Activated T-helper 2 cell treated with anti-CD3 and anti-CD28 coated beads, Interferon-gamma antibody, Interleukin-2, Interleukin-4, amounts not matched to agents 10 μg/mL and 5 μg/mL and 100 μg/mL, durations not matched to agents 14 hours and 24 hours and 36 hours (primary cell): ENCODE measurements at regions of chr10 and their contacts with region 1.

Region 1: DNA sequence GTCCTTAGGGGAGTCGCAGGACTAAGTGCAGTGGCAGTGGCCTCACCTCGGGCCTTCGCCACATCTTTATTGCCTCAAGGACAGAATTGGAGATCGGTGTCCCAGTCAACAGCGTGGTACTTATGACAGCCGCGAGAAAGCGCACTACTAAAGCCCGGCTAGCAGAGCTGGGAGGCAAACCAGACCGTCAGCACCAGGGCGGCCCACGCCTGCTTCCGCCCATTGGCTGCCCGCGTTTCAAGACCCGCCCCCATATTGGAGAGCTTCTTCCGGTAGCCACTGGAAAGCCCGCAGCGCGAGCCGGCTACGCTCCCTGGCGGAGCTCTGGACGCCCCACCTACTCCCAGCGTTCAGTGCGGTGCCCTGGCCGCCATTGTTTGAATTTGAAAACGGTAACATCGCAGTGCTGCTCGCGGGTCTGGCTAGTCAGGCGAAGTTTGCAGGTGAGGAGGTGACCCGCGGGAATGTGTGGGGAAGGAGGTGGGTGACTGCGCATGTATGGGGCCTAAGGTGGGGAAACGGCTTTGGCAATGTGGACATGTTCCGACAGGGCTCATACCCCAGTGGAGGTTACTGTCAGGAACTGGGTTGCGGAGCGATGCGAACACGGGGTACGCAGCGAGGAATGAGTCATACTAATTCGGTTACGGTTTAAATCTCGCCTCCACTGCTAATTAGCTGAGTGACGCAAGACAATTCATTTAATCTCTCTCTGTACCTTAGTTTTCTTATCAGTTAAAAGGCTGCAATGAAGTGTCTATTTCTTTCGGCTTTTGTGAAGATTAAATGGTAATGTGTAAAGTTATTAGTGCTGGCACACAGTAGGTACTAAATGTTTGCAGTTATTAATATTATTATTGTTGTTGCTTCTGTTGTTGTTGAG is at the start of gene KIF20B:
- DNase-seq: peak; percentile 96
- H3K4me3 Mint-ChIP-seq: peak within 1 kb of the TSS; percentile 97
- H3K27ac Mint-ChIP-seq: peak within 1 kb of the TSS; percentile 96
- H3K4me1 Mint-ChIP-seq: peaks cover 48% of the 10 kb centered on the region
- H3K27me3 Mint-ChIP-seq: no peaks in the 10 kb centered on the region
- total RNA-seq, gene KIF20B: 59.2 and 64.1 TPM in 2 replicates

Region 2: DNA sequence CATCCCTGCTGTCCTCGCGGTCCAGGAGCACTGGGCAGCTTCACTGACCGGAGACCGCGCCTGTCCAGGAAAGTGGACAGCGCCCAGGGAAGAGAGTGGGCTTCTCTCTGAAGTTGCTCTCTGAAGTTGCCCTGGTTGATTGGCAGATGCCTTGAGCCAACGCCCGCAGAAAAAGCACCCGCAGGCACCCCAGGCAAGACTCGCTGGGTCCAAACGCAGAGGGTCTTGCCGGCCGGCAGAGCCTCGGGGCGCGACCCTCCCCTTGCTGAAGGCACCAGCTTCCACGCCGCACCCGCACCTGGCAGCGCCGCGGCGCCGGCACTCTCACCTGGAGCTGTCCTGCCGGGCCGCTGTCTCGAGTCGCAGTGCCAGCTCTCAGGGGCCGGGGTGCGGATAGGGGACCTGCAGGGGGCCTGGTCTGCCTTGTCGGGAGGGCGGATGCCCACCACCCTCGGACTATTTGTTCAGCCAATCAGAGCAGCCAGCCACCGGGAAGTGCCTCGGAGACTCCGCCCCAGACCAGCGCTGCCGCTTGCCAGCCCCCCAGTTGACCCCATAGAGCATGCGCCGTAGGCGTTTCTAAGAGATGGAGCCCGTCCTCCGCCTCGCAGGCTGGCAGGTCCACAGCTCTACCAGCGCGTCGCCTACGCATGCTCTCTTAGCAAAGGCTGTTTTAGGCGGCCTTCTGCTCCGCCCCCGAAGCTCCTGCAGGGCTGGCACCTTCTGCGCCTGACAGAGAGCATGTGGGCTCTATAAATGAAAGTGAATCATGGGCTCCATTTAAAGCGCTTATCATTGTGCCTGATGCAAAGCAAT is 449.9 kb before region 1 on chr10 and contains the start of gene LIPA:
- intact Hi-C with region 1: loop called (anchors 5 kb)
- DNase-seq: peak; percentile 90
- H3K4me3 Mint-ChIP-seq: peak within 1 kb of the TSS; percentile 79
- H3K27ac Mint-ChIP-seq: no peak within 1 kb of the TSS
- H3K4me1 Mint-ChIP-seq: peaks cover 23% of the 10 kb centered on the region
- H3K27me3 Mint-ChIP-seq: peaks cover 10% of the 10 kb centered on the region
- total RNA-seq, gene LIPA: 12.9 and 13.6 TPM in 2 replicates

Region 3: GRCh38 chr10:89414146-89414878 is 287.2 kb before region 1 on chr10 and contains the start of gene IFIT5:
- intact Hi-C with region 1: loop called (anchors 5 kb)
- DNase-seq: peak; percentile 67
- H3K4me3 Mint-ChIP-seq: peak within 1 kb of the TSS; percentile 87
- H3K27ac Mint-ChIP-seq: peak within 1 kb of the TSS; percentile 93
- H3K4me1 Mint-ChIP-seq: peaks cover 40% of the 10 kb centered on the region
- H3K27me3 Mint-ChIP-seq: peaks cover 6% of the 10 kb centered on the region
- total RNA-seq, gene IFIT5: 4.4 and 4.8 TPM in 2 replicates

Region 4: DNA sequence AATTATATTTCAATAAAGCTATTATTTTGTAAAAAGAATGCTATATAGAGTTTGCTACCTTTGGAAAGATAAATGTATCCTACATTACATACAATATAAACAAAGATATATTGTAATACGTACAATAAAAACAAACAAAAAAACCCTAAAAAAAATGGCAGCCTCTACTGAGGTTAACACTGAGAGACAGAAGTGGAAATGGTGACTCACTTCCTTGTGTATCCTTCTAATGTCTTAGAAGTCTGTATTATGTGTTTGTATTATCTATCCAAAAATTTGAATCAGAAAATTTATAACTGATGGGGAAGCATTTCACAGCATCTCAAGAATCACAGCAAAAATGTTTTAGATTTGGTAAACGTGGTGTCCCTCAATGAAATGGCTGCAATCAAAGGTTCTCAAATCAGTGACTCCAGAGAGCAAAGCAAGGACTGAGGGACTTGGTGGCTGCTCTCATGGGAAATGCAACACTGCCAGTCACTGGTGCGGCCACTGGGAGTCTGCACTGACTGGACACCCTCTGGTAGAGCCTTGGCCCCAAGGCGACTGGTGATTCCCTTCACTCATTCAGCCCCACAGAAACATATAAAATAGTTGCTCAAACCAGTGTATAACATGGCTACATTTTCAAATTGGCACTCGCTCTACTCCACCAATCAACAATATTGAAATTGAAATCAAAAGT is 110.2 kb before region 1 on chr10:
- intact Hi-C with region 1: no loop called
- DNase-seq: no peak
- H3K4me3 Mint-ChIP-seq: no peak overlapping the region
- H3K27ac Mint-ChIP-seq: no peak overlapping the region
- H3K4me1 Mint-ChIP-seq: peaks cover 2% of the 10 kb centered on the region
- H3K27me3 Mint-ChIP-seq: no peaks in the 10 kb centered on the region

Region 5: DNA sequence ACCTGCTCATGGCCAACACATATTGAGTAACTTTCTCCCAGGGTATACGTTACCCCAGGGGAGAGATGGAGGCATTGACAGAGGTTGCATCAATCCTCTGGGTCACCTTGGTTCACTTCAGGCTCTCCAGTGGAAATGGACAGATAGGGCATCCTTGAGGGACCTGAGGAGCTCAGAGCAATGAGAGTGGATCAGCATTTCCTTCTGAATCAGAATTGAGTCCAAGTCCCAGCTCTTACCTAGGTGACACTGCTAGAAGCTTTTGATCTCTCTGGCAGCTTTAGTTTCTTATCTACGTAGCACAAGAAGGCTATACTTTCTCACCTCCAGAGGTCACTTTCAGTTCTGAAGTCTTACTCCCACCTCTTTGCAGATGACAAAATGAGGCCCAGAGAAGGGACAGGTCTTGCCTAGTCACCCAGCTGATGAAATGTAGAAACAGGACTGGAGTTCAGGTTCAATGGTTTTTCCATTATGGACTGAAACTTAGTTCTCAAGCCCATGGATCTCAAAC is 91.6 kb before region 1 on chr10:
- intact Hi-C with region 1: loop called (anchors 1 kb)
- DNase-seq: no peak
- H3K4me3 Mint-ChIP-seq: no peak overlapping the region
- H3K27ac Mint-ChIP-seq: no peak overlapping the region
- H3K4me1 Mint-ChIP-seq: peaks cover 17% of the 10 kb centered on the region
- H3K27me3 Mint-ChIP-seq: no peaks in the 10 kb centered on the region

Region 6: DNA sequence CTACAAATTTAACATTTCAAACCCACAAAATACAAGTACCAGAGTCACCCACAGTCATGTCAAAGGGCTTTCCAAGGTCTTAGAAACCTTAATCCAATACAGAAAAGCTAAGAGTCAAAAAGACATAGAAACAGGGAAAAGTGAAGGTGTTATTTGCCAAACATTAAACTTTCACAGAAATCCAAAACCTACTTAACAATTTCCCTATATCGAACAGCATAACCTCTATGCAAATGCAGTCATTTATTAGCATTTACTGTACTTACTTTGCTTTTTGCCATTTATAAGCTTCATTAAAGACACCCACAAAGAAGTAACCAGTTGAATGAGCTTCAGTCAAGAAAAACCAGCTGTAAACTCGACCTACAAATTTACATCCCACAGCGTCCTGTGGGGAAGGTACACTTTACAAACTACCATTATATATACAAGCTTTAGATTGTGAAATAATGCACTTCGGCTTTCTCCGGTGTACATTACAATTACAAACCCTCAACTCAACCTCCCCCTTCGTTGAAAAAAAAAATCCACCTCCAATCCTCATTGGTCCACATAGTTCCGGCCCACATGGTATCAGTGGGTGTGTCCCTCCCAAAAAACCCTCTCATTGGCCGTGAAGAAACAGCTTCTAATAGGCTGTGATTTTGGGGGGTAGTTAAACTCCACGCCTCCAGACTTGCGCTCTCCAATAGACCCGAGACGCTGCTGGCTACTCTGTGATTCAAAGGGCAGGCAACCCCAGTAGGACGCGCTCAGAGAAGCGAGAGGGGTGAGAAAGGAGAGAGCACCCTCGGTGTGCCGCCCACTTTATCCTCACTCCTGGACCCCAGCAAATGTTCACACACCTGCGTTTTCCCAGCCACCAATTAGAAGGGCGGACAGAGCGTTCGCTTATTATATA is 57.8 kb before region 1 on chr10:
- intact Hi-C with region 1: loop called (anchors 1 kb)
- DNase-seq: peak; percentile 79
- H3K4me3 Mint-ChIP-seq: no peak overlapping the region
- H3K27ac Mint-ChIP-seq: no peak overlapping the region
- H3K4me1 Mint-ChIP-seq: peaks cover 12% of the 10 kb centered on the region
- H3K27me3 Mint-ChIP-seq: peaks cover 12% of the 10 kb centered on the region

Region 7: DNA sequence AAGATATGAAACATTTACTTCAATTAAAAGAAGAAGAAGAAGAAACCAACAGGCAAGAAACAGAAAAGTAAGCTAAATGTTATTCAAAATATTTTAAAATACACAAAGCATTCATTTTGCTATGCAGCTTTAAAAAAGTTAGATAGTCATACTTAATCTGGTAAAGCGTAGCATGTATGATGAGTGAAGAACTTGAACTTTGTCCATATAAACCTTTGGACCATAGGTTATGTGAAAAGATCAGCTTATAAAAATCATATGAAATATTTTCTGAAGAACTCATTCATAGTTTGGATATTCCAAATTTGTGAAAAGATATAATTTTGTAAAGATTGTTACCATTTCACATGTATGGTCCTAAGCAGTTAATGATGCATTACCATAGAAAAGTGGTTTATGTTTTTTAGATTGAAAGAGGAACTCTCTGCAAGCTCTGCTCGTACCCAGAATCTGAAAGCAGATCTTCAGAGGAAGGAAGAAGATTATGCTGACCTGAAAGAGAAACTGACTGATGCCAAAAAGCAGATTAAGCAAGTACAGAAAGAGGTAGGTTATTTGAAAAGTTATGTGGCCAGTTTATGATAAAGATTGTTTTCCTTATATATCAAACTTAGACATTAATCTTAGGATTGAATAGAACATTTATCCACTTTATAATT is 37.2 kb after region 1 on chr10:
- intact Hi-C with region 1: loop called (anchors 5 kb)
- DNase-seq: no peak
- H3K4me3 Mint-ChIP-seq: peak overlapping the region; percentile 60
- H3K27ac Mint-ChIP-seq: peak overlapping the region; percentile 84
- H3K4me1 Mint-ChIP-seq: peaks cover 33% of the 10 kb centered on the region
- H3K27me3 Mint-ChIP-seq: no peaks in the 10 kb centered on the region

Region 8: GRCh38 chr10:89805599-89806013 is 104.1 kb after region 1 on chr10:
- intact Hi-C with region 1: loop called (anchors 1 kb)
- DNase-seq: no peak
- H3K4me3 Mint-ChIP-seq: no peak overlapping the region
- H3K27ac Mint-ChIP-seq: peak overlapping the region; percentile 14
- H3K4me1 Mint-ChIP-seq: peaks cover 19% of the 10 kb centered on the region
- H3K27me3 Mint-ChIP-seq: peaks cover 40% of the 10 kb centered on the region